ENCODE measurements at regions of chr14 and their contacts with region 1.

Region 1: GRCh38 chr14:83071888-83072501 is 1538.3 kb upstream of the SEL1L start:
- DNase-seq: peak in 1 of 2 experiments; percentile 33
- H3K4me3 ChIP-seq: no peak overlapping the region
- H3K4me3 Mint-ChIP-seq: no peak overlapping the region
- H3K27ac Mint-ChIP-seq: no peak overlapping the region
- H3K4me1 ChIP-seq: no peaks in the 10 kb centered on the region
- H3K4me1 Mint-ChIP-seq: no peaks in the 10 kb centered on the region
- H3K27me3 ChIP-seq: no peaks in the 10 kb centered on the region
- H3K27me3 Mint-ChIP-seq: no peaks in the 10 kb centered on the region
- CTCF ChIP-seq: peak; percentile 50 to 56

Region 2: DNA sequence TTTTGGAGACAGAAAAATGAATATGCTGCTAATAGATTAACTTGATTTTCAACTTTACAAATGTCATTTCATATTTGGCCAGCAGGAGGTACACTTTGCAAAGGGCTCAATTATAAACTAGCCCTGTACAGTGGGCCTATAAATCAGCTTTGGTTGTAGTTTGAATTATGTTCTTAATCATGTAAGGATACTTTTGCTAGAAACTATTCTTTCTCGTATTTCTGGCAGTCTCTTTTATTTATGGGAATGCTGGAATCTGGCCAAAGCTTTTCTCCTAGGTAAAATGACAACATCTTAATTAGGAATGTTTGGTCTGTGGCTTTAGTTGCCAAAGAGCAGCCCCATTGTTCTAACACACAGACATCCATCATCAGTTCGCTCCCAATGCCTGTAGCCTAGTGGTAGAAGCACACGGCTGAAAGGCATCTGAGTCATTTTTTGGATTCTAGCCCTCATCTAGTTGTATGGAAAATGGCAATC is 216.0 kb before region 1 on chr14:
- CTCF ChIA-PET with region 1: no interaction called
- POLR2A ChIA-PET with region 1: no interaction called
- intact Hi-C with region 1: loop called (anchors 5 kb)
- DNase-seq: peak in 1 of 2 experiments; percentile 12
- H3K4me3 ChIP-seq: no peak overlapping the region
- H3K4me3 Mint-ChIP-seq: no peak overlapping the region
- H3K27ac Mint-ChIP-seq: no peak overlapping the region
- H3K4me1 ChIP-seq: no peaks in the 10 kb centered on the region
- H3K4me1 Mint-ChIP-seq: no peaks in the 10 kb centered on the region
- H3K27me3 ChIP-seq: no peaks in the 10 kb centered on the region
- H3K27me3 Mint-ChIP-seq: peaks cover 3% of the 10 kb centered on the region
- CTCF ChIP-seq: peak; percentile 36 to 50